Activated T-helper 2 cell treated with anti-CD3 and anti-CD28 coated beads, Interferon-gamma antibody, Interleukin-2, Interleukin-4, amounts not matched to agents 10 μg/mL and 5 μg/mL and 100 μg/mL, durations not matched to agents 14 hours and 24 hours and 36 hours (primary cell): ENCODE measurements at regions of chr2 and their contacts with region 1.

Region 1: GRCh38 chr2:160918906-160919503 is 241.2 kb upstream of the TANK start:
- DNase-seq: no peak
- H3K4me3 Mint-ChIP-seq: no peak overlapping the region
- H3K27ac Mint-ChIP-seq: no peak overlapping the region
- H3K4me1 Mint-ChIP-seq: no peaks in the 10 kb centered on the region
- H3K27me3 Mint-ChIP-seq: peaks cover 8% of the 10 kb centered on the region

Region 2: GRCh38 chr2:160252278-160252887 is 666.6 kb before region 1 on chr2:
- intact Hi-C with region 1: loop called (anchors 10 kb)
- DNase-seq: no peak
- H3K4me3 Mint-ChIP-seq: no peak overlapping the region
- H3K27ac Mint-ChIP-seq: no peak overlapping the region
- H3K4me1 Mint-ChIP-seq: no peaks in the 10 kb centered on the region
- H3K27me3 Mint-ChIP-seq: peaks cover 24% of the 10 kb centered on the region

Region 3: DNA sequence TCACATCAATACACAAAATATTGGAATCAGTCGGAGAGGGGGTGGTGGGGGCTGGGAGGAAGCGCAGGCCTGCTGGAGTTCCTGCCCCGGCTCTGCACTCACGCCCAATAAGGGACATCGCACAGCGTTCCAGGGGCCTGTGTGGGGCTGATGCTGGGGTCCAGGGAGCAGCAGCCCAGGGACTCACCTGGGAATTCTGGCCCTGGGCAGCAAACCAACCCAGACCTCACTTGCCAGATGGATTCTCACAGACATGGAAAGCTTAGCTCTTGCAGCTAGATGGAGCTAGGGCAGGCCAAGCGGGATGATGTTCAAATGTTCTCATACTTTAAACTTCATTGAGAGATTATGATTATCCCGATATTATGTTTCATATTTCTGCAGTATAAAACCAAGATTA is 25.4 kb before region 1 on chr2:
- intact Hi-C with region 1: no loop called
- DNase-seq: no peak
- H3K4me3 Mint-ChIP-seq: no peak overlapping the region
- H3K27ac Mint-ChIP-seq: no peak overlapping the region
- H3K4me1 Mint-ChIP-seq: no peaks in the 10 kb centered on the region
- H3K27me3 Mint-ChIP-seq: peaks cover 4% of the 10 kb centered on the region